IMR-90 (cell line): ENCODE measurements at regions of chrX and their contacts with region 1.

Region 1: DNA sequence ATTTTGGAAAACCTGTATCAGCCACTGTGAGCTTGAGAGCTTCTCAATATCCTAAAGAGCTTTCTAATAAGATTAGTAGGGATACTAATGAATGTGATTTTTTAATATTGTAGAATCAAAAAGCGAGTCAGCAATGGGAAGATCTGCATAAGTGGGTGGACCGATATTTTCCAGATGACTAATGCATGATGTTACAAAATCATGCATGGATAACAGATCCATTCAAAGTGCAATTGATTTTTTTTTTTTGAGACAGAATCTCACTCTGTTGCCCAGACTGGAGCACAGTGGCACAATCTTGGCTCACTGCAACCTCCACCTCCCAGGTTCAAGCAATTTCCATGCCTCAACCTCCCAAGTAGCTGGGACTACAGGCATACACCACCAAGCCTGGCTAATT is 7.3 kb upstream of the CLDN2 start:
- DNase-seq: peak; percentile 57
- ATAC-seq: peak; percentile 32; the same call in 1 of the 2 replicates
- H3K4me3 ChIP-seq: no peak overlapping the region
- H3K27ac ChIP-seq: no peak overlapping the region
- H3K4me1 ChIP-seq: no peaks in the 10 kb centered on the region
- H3K27me3 ChIP-seq: peaks cover 13% of the 10 kb centered on the region
- CTCF ChIP-seq: no peak
- POLR2A ChIP-seq: no peak
- RAD21 ChIP-seq: no peak

Region 2: GRCh38 chrX:107204063-107204605 is 291.3 kb after region 1 on chrX:
- CTCF ChIA-PET with region 1: no interaction called
- POLR2A ChIA-PET with region 1: interaction called, 12 read pairs
- dilution Hi-C with region 1: no loop called
- in situ Hi-C with region 1: no loop called
- intact Hi-C with region 1: no loop called
- DNase-seq: no peak
- ATAC-seq: no peak
- H3K4me3 ChIP-seq: no peak overlapping the region
- H3K27ac ChIP-seq: no peak overlapping the region
- H3K4me1 ChIP-seq: no peaks in the 10 kb centered on the region
- H3K27me3 ChIP-seq: peaks cover 2% of the 10 kb centered on the region
- CTCF ChIP-seq: no peak
- POLR2A ChIP-seq: no peak
- RAD21 ChIP-seq: no peak